Caco-2 (cell line): ENCODE measurements at regions of chr10 and their contacts with region 1.

Region 1: DNA sequence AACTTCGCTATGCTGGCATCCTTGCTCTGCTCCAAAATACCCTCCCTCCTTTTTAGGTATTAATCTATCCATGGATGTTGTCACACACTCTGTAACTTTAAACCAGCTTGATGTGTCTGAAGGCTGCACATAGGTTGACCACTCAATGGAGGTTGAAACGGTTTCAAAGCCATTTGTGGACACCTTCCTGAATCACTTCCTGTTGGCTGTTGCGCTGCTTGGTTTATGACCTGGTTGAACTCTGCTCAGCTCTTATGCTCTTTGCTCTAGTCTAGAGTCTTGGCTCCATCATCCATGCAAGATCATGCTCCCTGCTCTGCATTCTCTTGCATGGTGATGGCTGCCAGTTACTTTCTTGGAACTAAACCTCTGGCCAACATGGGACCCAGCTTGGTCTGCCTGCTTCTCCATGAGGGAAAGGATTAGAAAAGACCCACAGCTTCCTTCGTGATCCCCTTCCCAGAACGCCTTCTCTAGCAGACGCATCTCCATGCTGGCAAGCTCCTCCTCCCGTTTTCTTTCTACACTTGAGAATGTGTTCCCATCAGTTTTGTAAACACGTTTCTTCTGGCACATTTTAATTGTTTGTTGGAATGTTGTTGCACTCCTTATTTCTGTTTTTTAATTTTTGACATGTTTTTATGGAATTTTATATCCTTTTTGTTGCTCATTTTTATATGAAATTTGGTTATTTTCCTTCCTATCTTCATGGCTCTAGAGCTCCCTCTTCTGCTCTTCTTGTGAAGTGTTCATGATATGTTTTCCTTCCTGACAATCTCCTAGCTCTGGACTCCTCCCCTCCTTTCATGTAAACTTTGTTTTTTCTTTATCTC is 149.8 kb downstream of the XPNPEP1 start:
- DNase-seq: peak in 1 of 2 experiments; percentile 22
- H3K4me3 ChIP-seq: no peak overlapping the region
- H3K4me3 Mint-ChIP-seq: no peak overlapping the region
- H3K27ac Mint-ChIP-seq: no peak overlapping the region
- H3K4me1 ChIP-seq: no peaks in the 10 kb centered on the region
- H3K4me1 Mint-ChIP-seq: no peaks in the 10 kb centered on the region
- H3K27me3 ChIP-seq: no peaks in the 10 kb centered on the region
- H3K27me3 Mint-ChIP-seq: peaks cover 2% of the 10 kb centered on the region
- CTCF ChIP-seq: peak; percentile 60 to 66

Region 2: DNA sequence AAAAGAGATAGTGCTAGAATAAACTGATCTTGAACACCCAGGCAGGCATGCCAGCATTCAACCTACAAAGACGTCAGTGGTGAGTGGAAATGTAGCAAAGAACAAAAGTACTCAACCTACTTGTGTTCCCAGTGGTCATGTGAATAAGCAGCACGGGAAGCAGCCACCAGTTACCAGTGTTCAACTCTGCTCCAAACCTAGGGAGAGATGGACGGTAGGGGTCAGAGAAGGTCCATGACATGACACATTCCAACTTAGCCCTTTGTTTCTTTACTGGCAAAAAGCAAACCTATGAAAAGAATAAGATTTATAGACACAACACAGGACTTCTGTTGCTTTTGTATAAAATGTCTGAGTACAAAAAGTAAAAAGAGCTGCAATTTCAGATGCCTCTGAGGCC is 361.6 kb before region 1 on chr10:
- CTCF ChIA-PET with region 1: no interaction called
- POLR2A ChIA-PET with region 1: no interaction called
- intact Hi-C with region 1: loop called (anchors 1 kb)
- DNase-seq: peak in 1 of 2 experiments; percentile 10
- H3K4me3 ChIP-seq: no peak overlapping the region
- H3K4me3 Mint-ChIP-seq: no peak overlapping the region
- H3K27ac Mint-ChIP-seq: no peak overlapping the region
- H3K4me1 ChIP-seq: no peaks in the 10 kb centered on the region
- H3K4me1 Mint-ChIP-seq: no peaks in the 10 kb centered on the region
- H3K27me3 ChIP-seq: no peaks in the 10 kb centered on the region
- H3K27me3 Mint-ChIP-seq: no peaks in the 10 kb centered on the region
- CTCF ChIP-seq: no peak

Region 3: DNA sequence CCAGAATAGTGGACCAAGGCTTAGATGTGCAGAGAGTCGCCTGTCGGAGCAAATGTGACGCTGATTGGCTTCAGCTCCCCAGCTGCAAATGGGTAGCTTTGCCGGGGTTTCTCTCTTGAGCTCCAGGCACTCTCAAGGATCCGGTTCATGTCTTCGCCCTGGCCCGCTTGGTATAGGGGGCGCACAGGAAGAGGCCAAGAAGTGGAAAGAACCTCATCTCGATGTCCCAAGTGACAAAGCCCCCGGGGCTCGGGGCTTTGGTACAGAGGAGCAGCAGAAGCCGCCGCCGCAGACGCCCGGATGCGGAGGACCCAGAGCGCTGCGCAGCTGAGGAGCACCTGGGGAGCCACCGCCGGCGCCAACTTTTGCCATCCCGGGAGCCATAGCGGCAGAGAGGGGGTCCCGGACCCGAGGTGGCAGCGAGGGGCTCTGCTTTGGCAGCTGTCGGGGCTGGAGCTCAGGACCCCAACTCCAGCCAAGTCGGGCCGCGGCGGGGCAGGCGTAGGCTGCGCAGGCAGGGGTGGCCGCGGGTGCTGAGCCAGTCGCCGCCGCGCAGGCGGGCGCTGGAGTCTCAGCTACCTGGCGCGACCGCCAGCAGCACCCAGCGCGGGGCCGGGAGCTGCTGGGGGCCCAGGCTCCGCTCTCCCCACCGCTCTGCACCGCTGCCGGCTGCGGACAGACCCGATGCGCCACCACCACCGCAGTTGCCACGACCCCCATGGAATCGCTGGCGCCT is 316.8 kb before region 1 on chr10:
- CTCF ChIA-PET with region 1: no interaction called
- POLR2A ChIA-PET with region 1: no interaction called
- intact Hi-C with region 1: loop called (anchors 10 kb)
- DNase-seq: no peak
- H3K4me3 ChIP-seq: no peak overlapping the region
- H3K4me3 Mint-ChIP-seq: no peak overlapping the region
- H3K27ac Mint-ChIP-seq: no peak overlapping the region
- H3K4me1 ChIP-seq: no peaks in the 10 kb centered on the region
- H3K4me1 Mint-ChIP-seq: peaks cover 10% of the 10 kb centered on the region
- H3K27me3 ChIP-seq: no peaks in the 10 kb centered on the region
- H3K27me3 Mint-ChIP-seq: no peaks in the 10 kb centered on the region
- CTCF ChIP-seq: no peak

Region 4: GRCh38 chr10:109852475-109853037 is 79.1 kb after region 1 on chr10:
- CTCF ChIA-PET with region 1: interaction called, 7 read pairs
- POLR2A ChIA-PET with region 1: no interaction called
- intact Hi-C with region 1: loop called (anchors 2 kb)
- DNase-seq: peak; percentile 71 to 81
- H3K4me3 ChIP-seq: no peak overlapping the region
- H3K4me3 Mint-ChIP-seq: no peak overlapping the region
- H3K27ac Mint-ChIP-seq: no peak overlapping the region
- H3K4me1 ChIP-seq: no peaks in the 10 kb centered on the region; the same call in 1 of the 2 replicates
- H3K4me1 Mint-ChIP-seq: peaks cover 7% of the 10 kb centered on the region
- H3K27me3 ChIP-seq: no peaks in the 10 kb centered on the region
- H3K27me3 Mint-ChIP-seq: peaks cover 6% of the 10 kb centered on the region
- CTCF ChIP-seq: peak; percentile 89 to 95

Region 5: GRCh38 chr10:109875151-109875568 is 101.7 kb after region 1 on chr10:
- CTCF ChIA-PET with region 1: no interaction called
- POLR2A ChIA-PET with region 1: no interaction called
- intact Hi-C with region 1: no loop called
- DNase-seq: no peak
- H3K4me3 ChIP-seq: no peak overlapping the region
- H3K4me3 Mint-ChIP-seq: no peak overlapping the region
- H3K27ac Mint-ChIP-seq: no peak overlapping the region
- H3K4me1 ChIP-seq: 0 out of 2 replicates have a peak, but pooled peaks cover 3% of the 10 kb centered on the region
- H3K4me1 Mint-ChIP-seq: no peaks in the 10 kb centered on the region
- H3K27me3 ChIP-seq: no peaks in the 10 kb centered on the region
- H3K27me3 Mint-ChIP-seq: no peaks in the 10 kb centered on the region
- CTCF ChIP-seq: no peak